Activated CD8-positive, alpha-beta memory T cell treated with anti-CD3 and anti-CD28 coated beads, Interleukin-2, amount 10 ng/mL, durations not matched to agents 7 days and 5 days (primary cell): ENCODE measurements at regions of chr9 and their contacts with region 1.

Region 1: DNA sequence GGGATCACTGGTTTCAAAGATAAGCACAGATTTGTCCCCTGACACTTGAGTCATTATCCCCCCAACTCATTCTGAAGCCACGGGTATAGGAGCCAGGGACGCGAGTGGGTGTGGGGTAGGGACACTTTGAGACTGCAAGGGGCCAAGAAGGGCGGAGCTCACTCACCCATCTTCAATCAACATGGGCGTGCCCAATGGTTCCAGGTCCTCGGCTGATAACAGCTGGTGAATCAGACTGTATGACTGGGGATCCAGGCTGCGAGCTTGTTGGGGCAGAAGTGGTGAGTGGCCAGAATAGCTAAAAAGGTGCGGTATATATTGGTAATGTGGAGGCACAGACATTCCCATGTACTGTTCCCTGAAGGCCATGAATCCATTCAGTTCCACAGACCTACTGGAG is 30.7 kb upstream of the NR5A1 start:
- DNase-seq: no peak
- ATAC-seq: no peak
- H3K4me3 Mint-ChIP-seq: no peak overlapping the region
- H3K27ac Mint-ChIP-seq: no peak overlapping the region
- H3K4me1 Mint-ChIP-seq: no peaks in the 10 kb centered on the region
- H3K27me3 Mint-ChIP-seq: peaks cover 15% of the 10 kb centered on the region

Region 2: GRCh38 chr9:124037779-124038178 is 500.1 kb before region 1 on chr9:
- CTCF ChIA-PET with region 1: no interaction called
- DNase-seq: no peak
- ATAC-seq: no peak
- H3K4me3 Mint-ChIP-seq: no peak overlapping the region
- H3K27ac Mint-ChIP-seq: no peak overlapping the region
- H3K4me1 Mint-ChIP-seq: peaks cover 4% of the 10 kb centered on the region
- H3K27me3 Mint-ChIP-seq: peaks cover 58% of the 10 kb centered on the region

Region 3: GRCh38 chr9:124420991-124421543 is 116.9 kb before region 1 on chr9:
- CTCF ChIA-PET with region 1: interaction called, 54 read pairs
- DNase-seq: no peak
- ATAC-seq: no peak
- H3K4me3 Mint-ChIP-seq: no peak overlapping the region
- H3K27ac Mint-ChIP-seq: no peak overlapping the region
- H3K4me1 Mint-ChIP-seq: peaks cover 18% of the 10 kb centered on the region
- H3K27me3 Mint-ChIP-seq: peaks cover 6% of the 10 kb centered on the region

Region 4: GRCh38 chr9:124522121-124523098 is 15.5 kb before region 1 on chr9:
- CTCF ChIA-PET with region 1: interaction called, 26 read pairs
- DNase-seq: no peak
- ATAC-seq: no peak
- H3K4me3 Mint-ChIP-seq: no peak overlapping the region
- H3K27ac Mint-ChIP-seq: no peak overlapping the region
- H3K4me1 Mint-ChIP-seq: no peaks in the 10 kb centered on the region
- H3K27me3 Mint-ChIP-seq: peaks cover 9% of the 10 kb centered on the region

Region 5: DNA sequence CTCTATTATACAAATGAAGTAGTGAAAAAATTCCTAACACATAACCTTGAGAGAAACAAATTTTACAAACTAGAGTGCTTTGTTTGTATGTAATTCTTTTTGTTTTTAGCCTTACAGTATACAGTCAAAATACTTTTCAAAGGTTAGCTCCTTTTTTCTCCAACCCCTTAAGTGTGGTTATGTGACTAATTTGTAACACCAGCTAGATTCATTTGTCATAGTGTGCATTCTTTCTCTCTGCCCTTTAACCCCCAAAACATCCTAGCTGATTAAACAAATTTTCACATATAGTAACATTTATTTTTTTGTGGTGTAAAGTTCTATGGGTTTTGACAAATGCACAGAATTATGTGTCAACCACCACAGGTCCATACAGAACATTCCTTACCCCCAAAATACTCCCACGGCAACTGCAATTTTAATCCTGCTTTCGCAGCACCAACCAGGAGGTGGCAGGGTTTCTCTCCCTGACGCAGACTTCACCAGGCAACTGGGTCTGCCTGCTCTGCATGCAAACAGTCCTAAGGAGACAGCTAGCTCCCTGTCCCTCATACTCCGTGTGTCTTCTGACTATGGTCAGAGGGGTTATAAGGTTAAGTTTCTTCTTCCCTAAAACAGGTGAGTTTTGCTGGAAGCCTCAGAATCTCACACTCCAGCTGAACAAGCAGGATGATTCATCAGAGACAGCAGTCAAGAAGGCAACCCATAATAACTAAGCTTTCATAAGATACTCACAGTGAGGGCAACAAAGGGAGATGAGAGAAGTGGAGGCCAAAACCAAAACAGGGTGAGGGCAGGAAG is 13.7 kb after region 1 on chr9:
- CTCF ChIA-PET with region 1: interaction called, 13 read pairs
- DNase-seq: peak; percentile 60
- ATAC-seq: peak; percentile 73
- H3K4me3 Mint-ChIP-seq: no peak overlapping the region
- H3K27ac Mint-ChIP-seq: no peak overlapping the region
- H3K4me1 Mint-ChIP-seq: peaks cover 8% of the 10 kb centered on the region
- H3K27me3 Mint-ChIP-seq: peaks cover 14% of the 10 kb centered on the region

Region 6: DNA sequence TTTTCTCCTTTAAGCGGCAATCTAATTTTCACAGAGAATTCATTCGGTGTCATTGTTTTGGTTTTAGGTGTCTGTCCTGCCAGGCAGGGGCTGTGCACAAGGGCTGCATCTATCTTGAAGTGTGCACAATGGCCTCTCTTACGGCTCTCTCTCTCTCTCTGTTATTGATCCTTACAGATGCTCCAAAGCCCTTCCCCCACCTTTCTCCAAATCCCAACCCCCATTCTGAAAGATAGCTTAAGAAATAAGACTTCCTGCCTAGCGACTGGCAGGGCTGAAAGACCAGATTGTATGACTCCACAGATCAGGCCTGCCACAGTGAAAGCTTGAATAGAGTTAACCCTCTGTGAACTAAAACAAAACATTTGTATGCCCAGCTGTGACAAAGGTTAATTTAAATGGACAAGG is 55.7 kb after region 1 on chr9:
- CTCF ChIA-PET with region 1: no interaction called
- DNase-seq: no peak
- ATAC-seq: no peak
- H3K4me3 Mint-ChIP-seq: no peak overlapping the region
- H3K27ac Mint-ChIP-seq: no peak overlapping the region
- H3K4me1 Mint-ChIP-seq: no peaks in the 10 kb centered on the region
- H3K27me3 Mint-ChIP-seq: peaks cover 51% of the 10 kb centered on the region